Right ventricle myocardium superior (tissue), 1 donor: ENCODE measurements at regions of chr1 and their contacts with region 1.

Region 1: DNA sequence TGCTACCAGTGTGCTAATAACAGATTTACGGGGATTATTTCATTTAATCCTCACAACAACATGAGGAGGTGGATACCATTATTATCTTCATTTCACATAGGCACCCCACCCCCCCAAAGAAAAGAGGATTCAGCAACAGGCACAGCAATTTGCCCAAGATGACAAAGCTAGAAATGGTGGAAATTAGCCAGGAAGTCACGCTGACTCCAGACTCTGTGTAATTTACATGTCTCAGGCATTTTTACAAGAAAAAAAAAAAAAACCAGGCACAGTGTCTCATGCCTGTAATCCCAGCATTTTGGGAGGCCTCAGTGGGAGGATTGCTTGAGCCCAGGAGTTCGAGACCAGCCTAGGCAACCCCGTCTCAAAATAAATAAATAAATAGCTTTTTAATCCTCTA is 37.5 kb upstream of the PRDM2 start:
- DNase-seq: no peak
- ATAC-seq: peak; percentile 25

Region 2: DNA sequence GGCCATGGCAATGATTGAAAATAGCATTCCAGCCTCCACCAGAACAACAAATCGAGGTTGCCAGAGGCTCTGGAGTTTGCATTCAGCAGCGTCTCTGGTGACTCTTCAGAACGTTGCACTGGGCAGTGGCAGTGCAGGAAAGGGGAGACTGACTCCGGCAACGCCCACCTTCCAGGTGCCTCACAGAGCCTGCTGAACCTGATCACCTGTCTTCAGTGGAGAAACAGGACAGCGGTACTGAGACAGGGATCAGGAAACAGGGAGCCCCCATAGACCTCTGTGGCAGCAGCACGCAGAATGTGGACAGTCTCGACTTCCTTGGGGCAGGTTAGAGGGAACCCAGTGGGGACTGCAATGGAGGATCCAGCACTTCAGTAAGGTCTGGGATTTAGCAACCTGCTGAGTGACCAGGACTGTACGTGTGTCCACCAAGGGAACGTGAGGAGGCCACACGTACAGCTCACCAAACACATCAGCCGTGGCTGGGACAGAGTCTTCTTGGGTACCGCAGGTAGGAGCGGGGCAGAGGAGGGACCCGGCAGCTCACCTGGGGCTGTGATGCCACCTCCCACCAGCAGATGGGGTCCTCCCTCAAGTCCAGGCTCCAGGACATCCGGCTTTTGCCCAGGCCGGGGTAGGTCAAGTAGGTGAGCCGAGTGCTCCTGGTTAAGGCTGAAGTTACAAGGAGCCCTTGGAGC is 166.1 kb after region 1 on chr1:
- intact Hi-C with region 1: loop called (anchors 10 kb)
- DNase-seq: no peak
- ATAC-seq: peak; percentile 52

Region 3: DNA sequence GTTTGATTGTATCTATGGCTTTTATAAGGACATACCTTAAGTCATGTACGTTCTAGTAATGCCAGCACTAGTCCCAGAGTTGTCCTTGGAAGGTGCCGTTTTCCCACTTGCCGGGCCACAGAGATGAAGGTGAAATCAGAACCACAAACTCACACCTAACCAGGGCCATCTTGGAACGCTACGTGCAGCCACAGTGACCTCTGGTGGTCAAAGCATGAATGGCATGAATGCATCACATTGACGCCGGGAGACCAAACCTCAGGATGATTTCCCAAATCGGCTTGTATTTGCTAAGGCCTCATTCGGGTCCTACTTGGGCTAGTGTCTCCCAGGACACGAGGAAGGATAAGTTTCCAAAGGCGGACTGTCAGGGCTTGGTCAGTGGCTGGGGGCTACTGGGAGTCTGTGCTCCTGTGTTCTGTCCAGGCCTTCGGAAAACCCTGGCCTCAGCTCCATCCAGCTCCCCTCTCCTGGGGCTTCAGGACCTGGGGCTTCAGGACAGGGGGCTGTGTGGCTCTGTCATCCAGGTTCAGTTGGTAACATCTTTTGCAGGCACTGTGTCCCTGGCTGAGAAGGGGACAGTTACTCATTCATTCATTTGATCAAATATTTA is 298.0 kb after region 1 on chr1:
- intact Hi-C with region 1: loop called (anchors 1 kb)
- DNase-seq: peak; percentile 72
- ATAC-seq: peak; percentile 77